Dorsolateral prefrontal cortex (tissue), 120 donors: ENCODE measurements at regions of chr1 and their contacts with region 1.

Region 1: GRCh38 chr1:175267716-175268384 is 75.3 kb upstream of the KIAA0040 start:
- DNase-seq: no peak
- H3K4me3 ChIP-seq: no peak overlapping the region
- H3K27ac ChIP-seq: peak overlapping the region in 1 of 59 donors; percentile 41
- H3K27me3 ChIP-seq: peaks cover 0 to 6% (median 0%) of the 10 kb centered on the region in 45 donors
- CTCF ChIP-seq: no peak

Region 2: DNA sequence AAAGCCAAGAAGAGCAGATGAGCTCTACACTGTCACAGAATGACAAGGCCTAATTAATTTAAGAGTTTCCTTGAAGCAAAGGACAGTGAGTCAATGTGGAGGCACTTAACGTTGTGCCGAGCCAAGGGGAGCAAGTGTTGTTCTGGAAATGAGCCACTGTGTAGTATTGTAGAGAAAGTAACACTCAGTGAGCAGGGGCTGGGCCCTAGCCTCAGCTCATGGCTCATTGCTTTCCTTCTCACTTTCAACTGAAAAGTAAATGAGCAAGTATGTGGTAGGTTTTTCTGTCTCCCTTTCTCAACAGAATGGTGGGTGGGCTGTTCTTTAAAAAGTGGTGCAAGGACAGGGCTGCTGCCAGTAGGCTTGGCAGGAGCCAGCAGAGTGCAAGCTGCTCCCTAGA is 63.5 kb before region 1 on chr1:
- intact Hi-C with region 1: loop called in 1 of 2 experiments (anchors 5 kb)
- DNase-seq: peak in 3 of 10 donors; percentile 40 to 56 (median 51)
- H3K4me3 ChIP-seq: no peak overlapping the region
- H3K27ac ChIP-seq: no peak overlapping the region
- H3K27me3 ChIP-seq: peaks cover 0 to 3% (median 0%) of the 10 kb centered on the region in 45 donors
- CTCF ChIP-seq: no peak